Activated B cell treated with CpG ODN at 0.5 μM for 24 hours (primary cell): ENCODE measurements at regions of chr2 and their contacts with region 1.

Region 1: GRCh38 chr2:174341286-174341994 is 6.7 kb downstream of the SP9 start:
- DNase-seq: peak; percentile 82
- ATAC-seq: peak; percentile 73
- H3K4me3 Mint-ChIP-seq: peak overlapping the region; percentile 80
- H3K27ac Mint-ChIP-seq: peak overlapping the region; percentile 81
- H3K4me1 Mint-ChIP-seq: peaks cover 39% of the 10 kb centered on the region
- H3K27me3 Mint-ChIP-seq: peaks cover 47% of the 10 kb centered on the region
- CTCF ChIP-seq: peak; percentile 86

Region 2: GRCh38 chr2:172555522-172556283 is 1785.7 kb before region 1 on chr2 and contains the start of gene PDK1:
- CTCF ChIA-PET with region 1: no interaction called
- POLR2A ChIA-PET with region 1: no interaction called
- intact Hi-C with region 1: loop called (anchors 10 kb)
- DNase-seq: peak; percentile 95
- ATAC-seq: peak; percentile 92
- H3K4me3 Mint-ChIP-seq: peak within 1 kb of the TSS; percentile 95
- H3K27ac Mint-ChIP-seq: peak within 1 kb of the TSS; percentile 93
- H3K4me1 Mint-ChIP-seq: peaks cover 35% of the 10 kb centered on the region
- H3K27me3 Mint-ChIP-seq: no peaks in the 10 kb centered on the region
- CTCF ChIP-seq: no peak
- total RNA-seq, gene PDK1: 14.8 and 16.3 TPM in 2 replicates

Region 3: DNA sequence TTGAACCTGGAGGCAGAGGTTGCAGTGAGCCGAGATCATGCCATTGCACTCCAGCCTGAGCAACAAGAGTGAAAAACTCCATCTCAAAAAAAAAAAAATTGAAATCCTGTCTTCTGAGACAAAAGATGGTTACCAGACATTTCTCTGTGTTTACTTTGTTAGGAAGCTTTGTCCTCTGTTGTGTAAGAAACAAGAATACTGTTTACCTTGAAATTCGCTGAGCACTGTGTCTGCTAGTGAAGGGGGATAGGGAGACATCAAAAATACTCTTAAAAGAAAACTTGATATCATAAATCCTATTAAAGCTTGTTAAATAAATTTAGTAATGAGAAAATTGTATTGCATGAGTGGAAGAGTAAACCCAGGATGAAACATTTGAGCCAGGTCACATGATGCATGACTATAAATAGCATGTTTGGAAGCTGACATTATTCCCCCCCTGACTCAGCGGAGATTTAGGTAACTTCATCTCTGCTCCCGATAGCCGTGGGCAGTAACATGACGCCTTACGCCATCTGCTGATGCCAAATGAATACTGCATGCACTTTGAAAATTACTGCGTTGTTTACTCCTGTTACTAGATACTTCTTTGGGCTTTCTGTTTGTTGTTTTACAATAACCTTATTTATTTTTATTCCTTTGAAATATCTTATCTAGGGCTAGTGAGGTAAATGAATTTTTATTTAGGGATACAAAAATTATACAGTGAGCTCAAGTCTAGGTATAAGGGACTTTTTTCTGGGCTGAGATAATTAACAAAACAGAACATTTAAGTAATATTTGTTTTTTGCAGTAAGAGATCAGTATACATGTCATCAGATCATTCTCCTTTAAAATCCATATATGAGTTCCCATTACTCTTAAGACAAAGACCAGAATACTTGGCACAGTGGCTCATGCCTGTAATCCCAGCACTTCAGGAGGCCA is 1130.9 kb before region 1 on chr2:
- CTCF ChIA-PET with region 1: no interaction called
- POLR2A ChIA-PET with region 1: no interaction called
- intact Hi-C with region 1: loop called (anchors 2 kb)
- DNase-seq: no peak
- ATAC-seq: peak; percentile 73
- H3K4me3 Mint-ChIP-seq: no peak overlapping the region
- H3K27ac Mint-ChIP-seq: no peak overlapping the region
- H3K4me1 Mint-ChIP-seq: peaks cover 5% of the 10 kb centered on the region
- H3K27me3 Mint-ChIP-seq: no peaks in the 10 kb centered on the region
- CTCF ChIP-seq: peak; percentile 72

Region 4: GRCh38 chr2:173752152-173752551 is 589.3 kb before region 1 on chr2:
- CTCF ChIA-PET with region 1: no interaction called
- POLR2A ChIA-PET with region 1: no interaction called
- intact Hi-C with region 1: loop called (anchors 1 kb)
- DNase-seq: no peak
- ATAC-seq: no peak
- H3K4me3 Mint-ChIP-seq: no peak overlapping the region
- H3K27ac Mint-ChIP-seq: no peak overlapping the region
- H3K4me1 Mint-ChIP-seq: no peaks in the 10 kb centered on the region
- H3K27me3 Mint-ChIP-seq: peaks cover 5% of the 10 kb centered on the region
- CTCF ChIP-seq: no peak

Region 5: DNA sequence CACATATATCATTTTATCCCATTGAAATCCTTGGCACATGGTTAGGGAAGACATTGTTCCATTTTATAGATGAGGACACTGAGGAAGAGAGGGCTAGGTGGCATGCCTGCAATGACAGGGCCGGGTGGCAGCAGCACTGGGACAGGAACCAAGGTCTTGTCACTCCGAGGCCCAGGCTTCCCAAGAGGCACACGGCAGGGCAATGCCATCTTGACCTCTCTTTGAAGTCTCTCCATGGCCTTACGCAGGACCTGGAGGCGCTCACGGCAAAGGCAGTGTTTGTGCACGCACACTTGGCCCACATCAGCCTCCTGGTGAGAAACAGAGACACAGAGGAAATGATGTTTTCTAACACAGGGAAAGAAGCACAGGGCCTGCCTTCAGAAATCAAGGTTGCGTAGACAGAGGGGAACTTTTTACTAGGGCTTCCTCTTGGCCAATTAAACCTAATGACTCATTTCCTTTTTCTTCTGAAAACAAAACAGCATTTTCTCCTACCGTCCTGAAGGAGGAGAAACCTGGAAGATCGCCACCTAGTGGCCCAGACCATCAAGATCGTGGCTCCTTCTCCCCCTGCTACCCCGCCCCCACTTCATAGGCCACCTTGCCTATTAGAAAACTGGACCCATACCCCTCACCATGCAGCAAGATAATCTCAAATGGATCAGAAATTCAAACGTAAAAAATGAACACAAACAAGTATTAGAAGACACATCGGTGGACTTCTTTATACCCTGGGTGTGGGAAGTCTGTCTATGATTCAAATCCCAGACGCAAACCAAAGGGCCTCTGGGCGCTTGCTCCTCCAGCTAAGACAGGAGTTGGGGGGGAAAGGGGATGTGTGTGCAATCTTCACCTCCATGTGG is 301.7 kb before region 1 on chr2:
- CTCF ChIA-PET with region 1: no interaction called
- POLR2A ChIA-PET with region 1: no interaction called
- intact Hi-C with region 1: loop called (anchors 5 kb)
- DNase-seq: peak; percentile 69
- ATAC-seq: peak; percentile 93
- H3K4me3 Mint-ChIP-seq: peak overlapping the region; percentile 50
- H3K27ac Mint-ChIP-seq: peak overlapping the region; percentile 92
- H3K4me1 Mint-ChIP-seq: peaks cover 28% of the 10 kb centered on the region
- H3K27me3 Mint-ChIP-seq: no peaks in the 10 kb centered on the region
- CTCF ChIP-seq: no peak

Region 6: DNA sequence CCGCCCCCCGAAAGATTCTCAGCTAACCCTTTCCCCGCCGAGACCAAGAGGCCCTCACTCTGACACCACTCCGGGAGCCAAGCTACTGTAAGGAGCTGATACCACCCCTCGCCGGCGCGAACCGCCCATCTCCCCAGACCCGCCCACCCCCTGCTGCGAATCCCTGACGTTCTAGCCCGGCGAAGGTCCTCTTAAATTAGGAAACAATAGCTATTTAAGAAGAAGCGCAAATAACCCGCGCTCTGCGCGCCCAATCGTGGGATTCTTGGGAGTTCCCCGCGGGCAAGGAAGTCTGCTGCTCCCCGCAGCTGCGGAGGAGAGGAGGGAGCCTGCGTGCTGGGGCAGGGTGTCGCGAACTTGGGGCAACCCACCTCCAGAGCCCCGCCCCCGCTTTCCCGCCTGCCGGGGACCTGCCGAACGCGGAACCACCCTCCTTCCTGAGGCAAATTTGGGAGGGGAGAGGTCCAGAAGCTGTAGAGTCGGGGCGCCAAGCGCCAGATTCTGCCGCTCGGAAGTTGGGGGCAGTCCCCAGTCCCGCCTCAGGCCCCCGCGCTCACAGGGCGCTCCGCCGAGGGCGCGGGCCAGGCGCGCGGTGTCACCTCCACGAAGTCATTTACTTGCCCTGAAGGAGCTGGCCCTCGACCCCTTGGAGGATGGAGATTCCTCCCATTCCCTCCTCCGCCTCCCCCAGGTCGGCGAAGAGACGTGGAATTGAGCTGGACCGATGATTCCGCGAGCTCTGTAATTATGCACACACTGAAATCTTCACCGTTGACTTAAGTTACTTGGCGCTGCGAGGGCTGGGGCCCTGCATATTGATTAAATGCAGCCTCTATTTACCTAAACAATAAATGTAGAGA is 15.0 kb before region 1 on chr2:
- CTCF ChIA-PET with region 1: interaction called, 28 read pairs
- POLR2A ChIA-PET with region 1: interaction called, 3 read pairs
- intact Hi-C with region 1: loop called (anchors 1 kb)
- DNase-seq: no peak
- ATAC-seq: peak; percentile 50
- H3K4me3 Mint-ChIP-seq: peak overlapping the region; percentile 85
- H3K27ac Mint-ChIP-seq: peak overlapping the region; percentile 18
- H3K4me1 Mint-ChIP-seq: peaks cover 27% of the 10 kb centered on the region
- H3K27me3 Mint-ChIP-seq: peaks cover 55% of the 10 kb centered on the region
- CTCF ChIP-seq: no peak

Region 7: DNA sequence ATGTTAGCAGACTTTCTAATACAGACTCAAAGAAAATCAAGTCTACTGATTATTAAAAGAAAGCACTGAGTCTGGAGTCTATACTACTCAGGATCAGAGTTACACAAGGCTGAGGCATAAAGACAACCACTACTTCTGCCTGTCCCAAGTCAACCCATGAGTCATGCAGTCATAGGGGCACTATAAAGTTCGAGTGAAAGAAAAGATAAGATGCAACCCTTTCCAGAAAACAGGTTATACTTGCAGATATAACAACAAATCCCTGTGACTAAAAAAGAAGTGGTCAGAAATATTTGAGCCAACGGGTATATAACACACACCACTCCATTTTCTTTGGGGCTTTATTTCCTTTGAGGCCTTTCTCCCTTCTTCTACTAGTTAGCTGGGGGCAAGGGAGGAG is 35.5 kb after region 1 on chr2:
- CTCF ChIA-PET with region 1: no interaction called
- POLR2A ChIA-PET with region 1: no interaction called
- intact Hi-C with region 1: no loop called
- DNase-seq: no peak
- ATAC-seq: no peak
- H3K4me3 Mint-ChIP-seq: no peak overlapping the region
- H3K27ac Mint-ChIP-seq: no peak overlapping the region
- H3K4me1 Mint-ChIP-seq: no peaks in the 10 kb centered on the region
- H3K27me3 Mint-ChIP-seq: no peaks in the 10 kb centered on the region
- CTCF ChIP-seq: no peak

Region 8: DNA sequence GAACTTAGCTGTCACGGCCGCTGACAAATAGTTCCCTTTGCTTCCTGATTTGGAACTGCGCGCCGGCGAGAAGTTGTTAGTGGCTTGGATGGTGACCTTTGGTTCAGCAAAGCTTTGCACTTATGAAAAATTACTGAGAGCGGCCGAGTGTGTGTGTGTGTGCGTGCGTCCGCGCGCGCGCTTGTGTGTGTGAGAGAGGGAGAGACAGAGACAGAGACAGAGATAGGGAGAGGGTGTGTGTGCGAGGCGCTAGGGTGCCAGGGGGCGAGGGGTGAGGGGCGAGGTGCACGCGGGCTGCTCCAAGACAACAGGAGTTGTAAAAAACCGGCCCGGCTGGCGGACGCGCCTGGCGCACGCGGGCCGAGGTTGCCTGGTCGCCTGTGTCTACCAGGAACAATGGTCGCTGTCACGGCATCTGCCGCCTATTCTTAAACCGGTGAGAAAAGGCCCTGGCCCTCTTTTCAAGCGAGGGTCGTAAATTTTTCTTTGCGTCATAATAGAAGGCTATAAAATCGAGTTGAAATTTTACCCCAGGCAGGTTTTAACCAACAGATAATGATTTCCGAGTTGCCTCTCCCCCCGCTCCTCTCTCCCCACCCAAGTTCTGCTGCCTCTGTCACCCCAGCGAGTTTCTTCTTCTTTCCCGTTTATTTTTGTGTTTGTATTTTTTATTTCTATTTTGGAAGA is 1816.2 kb after region 1 on chr2:
- CTCF ChIA-PET with region 1: no interaction called
- POLR2A ChIA-PET with region 1: no interaction called
- intact Hi-C with region 1: loop called (anchors 10 kb)
- DNase-seq: no peak
- ATAC-seq: no peak
- H3K4me3 Mint-ChIP-seq: no peak overlapping the region
- H3K27ac Mint-ChIP-seq: no peak overlapping the region
- H3K4me1 Mint-ChIP-seq: peaks cover 3% of the 10 kb centered on the region
- H3K27me3 Mint-ChIP-seq: peaks cover 58% of the 10 kb centered on the region
- CTCF ChIP-seq: no peak